ENCODE measurements at regions of chr15 and their contacts with region 1.

Region 1: GRCh38 chr15:88657326-88658069 is 18.7 kb downstream of the ISG20 start:
- DNase-seq: peak; percentile 76
- H3K27ac ChIP-seq: peak overlapping the region; percentile 84
- CTCF ChIP-seq: peak; percentile 93

Region 2: GRCh38 chr15:88701561-88702095 is 44.1 kb after region 1 on chr15:
- CTCF ChIA-PET with region 1: interaction called, 17 read pairs
- POLR2A ChIA-PET with region 1: no interaction called
- DNase-seq: peak; percentile 16
- H3K27ac ChIP-seq: no peak overlapping the region
- CTCF ChIP-seq: no peak

Region 3: DNA sequence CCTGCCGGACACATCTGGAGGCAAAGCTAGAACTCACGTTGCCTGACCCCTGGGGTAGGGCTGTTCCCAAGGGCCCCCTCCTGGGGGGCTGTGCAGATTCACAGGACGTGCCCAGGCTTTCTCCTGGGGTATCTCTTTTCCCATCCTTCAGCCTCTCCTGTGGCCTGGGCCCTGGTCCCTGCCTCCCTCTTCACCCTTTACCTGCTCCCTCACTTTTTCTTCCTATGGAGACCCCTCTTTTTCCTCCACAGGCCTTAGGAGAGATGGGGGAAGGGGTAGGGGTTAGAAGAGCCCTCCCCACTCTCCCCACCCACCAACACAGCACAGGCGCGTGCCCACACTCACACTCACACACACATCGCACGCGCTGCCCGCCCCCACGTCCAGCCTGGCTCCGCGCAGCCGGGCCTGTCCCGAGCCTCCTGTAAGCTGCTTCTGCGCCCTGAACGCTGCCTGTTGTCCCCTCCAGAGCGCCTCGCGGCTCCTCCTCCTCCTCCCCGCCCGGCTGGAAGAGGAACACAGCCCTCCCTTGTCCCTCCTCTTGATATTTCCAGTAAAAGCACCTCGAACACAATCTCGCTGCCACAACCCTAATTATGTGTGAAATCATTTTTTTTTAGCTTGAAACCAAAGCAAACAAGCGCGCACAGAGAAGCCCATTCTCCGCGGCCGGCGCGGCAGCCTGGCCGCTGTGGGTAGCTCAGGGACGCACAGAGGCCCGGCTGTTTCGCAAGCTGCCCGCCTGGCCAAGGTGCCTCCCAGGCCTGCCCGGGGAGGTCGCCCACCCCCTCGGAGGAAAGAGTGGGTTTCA is 111.9 kb after region 1 on chr15:
- CTCF ChIA-PET with region 1: no interaction called
- POLR2A ChIA-PET with region 1: no interaction called
- DNase-seq: no peak
- H3K27ac ChIP-seq: no peak overlapping the region
- CTCF ChIP-seq: no peak

Region 4: GRCh38 chr15:88834211-88834812 is 176.8 kb after region 1 on chr15:
- CTCF ChIA-PET with region 1: interaction called, 15 read pairs
- POLR2A ChIA-PET with region 1: no interaction called
- DNase-seq: peak; percentile 33
- H3K27ac ChIP-seq: no peak overlapping the region
- CTCF ChIP-seq: peak; percentile 34; the same call in 1 of the 2 replicates

Region 5: GRCh38 chr15:88897456-88898194 is 240.1 kb after region 1 on chr15:
- CTCF ChIA-PET with region 1: interaction called, 14 read pairs
- POLR2A ChIA-PET with region 1: no interaction called
- DNase-seq: peak; percentile 90
- H3K27ac ChIP-seq: peak overlapping the region; percentile 67
- CTCF ChIP-seq: peak; percentile 90

Region 6: DNA sequence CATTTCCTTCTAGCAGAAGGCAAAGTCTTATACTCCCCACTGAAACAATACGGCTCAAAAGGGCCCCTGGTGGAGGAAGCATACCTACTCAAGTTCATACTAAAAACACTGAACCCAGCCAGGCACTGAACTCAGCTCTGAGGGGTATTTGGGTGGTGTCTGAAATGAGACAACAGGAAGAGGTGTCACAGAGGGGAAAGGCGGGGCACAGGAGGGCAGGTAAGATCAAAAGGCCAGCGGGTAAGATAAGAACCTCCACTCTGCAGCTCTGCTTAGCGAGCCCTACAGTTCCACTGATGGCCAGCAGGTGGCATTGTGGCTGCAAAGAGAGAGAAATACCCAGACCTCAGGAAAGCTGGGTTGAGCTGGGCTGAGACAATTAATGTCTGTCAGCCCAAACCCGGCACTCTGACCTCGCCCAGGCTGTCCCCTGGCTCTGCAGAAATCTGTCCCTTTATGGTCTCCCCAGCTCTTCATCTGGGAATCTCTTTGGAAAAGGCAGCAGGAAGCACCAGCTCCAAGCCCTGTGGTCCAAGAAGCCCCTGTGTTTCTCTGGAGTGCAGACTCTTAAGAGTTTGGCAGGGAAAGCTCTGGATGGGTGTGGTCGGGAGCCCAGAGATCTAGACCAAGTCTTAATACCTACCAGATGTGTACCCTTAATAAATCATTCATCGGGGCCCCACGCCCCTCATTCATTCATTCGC is 247.3 kb after region 1 on chr15:
- CTCF ChIA-PET with region 1: interaction called, 10 read pairs
- POLR2A ChIA-PET with region 1: no interaction called
- DNase-seq: peak; percentile 78
- H3K27ac ChIP-seq: peak overlapping the region; percentile 80
- CTCF ChIP-seq: peak; percentile 99

Measured in RWPE1 (cell line).